ENCODE measurements at regions of chr12 and their contacts with region 1.

Region 1: GRCh38 chr12:118103604-118104382 is at the start of gene VSIG10:
- DNase-seq: peak; percentile 64
- H3K4me3 ChIP-seq: peak within 1 kb of the TSS; percentile 74 to 79 (median 77)
- H3K27ac ChIP-seq: peak within 1 kb of the TSS; percentile 13
- H3K4me1 ChIP-seq: peaks cover 9% of the 10 kb centered on the region
- H3K27me3 ChIP-seq: no peaks in the 10 kb centered on the region
- CTCF ChIP-seq: no peak
- total RNA-seq, gene VSIG10: 11.3 to 16.8 TPM

Region 2: DNA sequence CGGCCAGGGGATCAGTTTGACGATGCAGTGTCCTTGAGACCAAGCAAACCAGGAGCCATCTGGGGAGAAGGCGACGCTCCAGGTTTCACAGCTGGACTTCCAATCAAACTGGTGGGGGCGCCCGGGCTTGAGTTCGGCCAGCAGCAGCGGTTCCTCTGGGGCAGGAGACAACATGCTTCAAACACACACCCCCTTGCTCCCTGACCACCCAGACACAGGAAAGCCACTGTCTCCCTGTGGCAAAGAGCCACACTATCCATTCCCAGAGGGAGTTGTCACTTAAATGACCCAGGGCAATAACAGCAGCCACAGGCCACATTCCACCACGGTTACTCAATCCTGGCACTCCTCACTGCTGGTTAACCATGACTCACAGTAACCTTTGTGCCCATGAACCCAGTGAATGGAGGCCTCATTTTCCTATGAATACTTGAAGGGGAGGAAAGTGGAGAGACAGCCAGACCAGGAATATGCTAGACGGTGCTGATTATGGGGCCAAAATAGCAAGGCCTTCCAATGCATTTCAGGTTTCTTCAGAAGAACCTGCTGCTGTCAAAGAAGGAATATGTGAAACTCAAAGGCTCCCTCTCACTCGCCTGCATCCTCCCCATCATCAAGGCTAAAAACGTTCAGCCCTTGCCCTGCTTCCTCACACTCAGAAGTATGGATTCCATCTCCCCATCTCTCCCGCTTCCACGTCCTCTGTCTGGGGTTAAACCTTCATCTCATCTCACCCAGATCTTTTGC is 51.3 kb before region 1 on chr12:
- CTCF ChIA-PET with region 1: no interaction called
- dilution Hi-C with region 1: no loop called
- in situ Hi-C with region 1: no loop called
- intact Hi-C with region 1: loop called (anchors 2 kb)
- DNase-seq: peak; percentile 97
- H3K4me3 ChIP-seq: no peak overlapping the region
- H3K27ac ChIP-seq: peak overlapping the region; percentile 79
- H3K4me1 ChIP-seq: peaks cover 23% of the 10 kb centered on the region
- H3K27me3 ChIP-seq: no peaks in the 10 kb centered on the region
- CTCF ChIP-seq: no peak

Region 3: GRCh38 chr12:118061011-118061875 is 42.5 kb before region 1 on chr12 and contains the start of gene WSB2:
- CTCF ChIA-PET with region 1: no interaction called
- dilution Hi-C with region 1: no loop called
- in situ Hi-C with region 1: no loop called
- intact Hi-C with region 1: loop called (anchors 1 kb)
- DNase-seq: peak; percentile 26
- H3K4me3 ChIP-seq: peak within 1 kb of the TSS; percentile 77 to 93 (median 84)
- H3K27ac ChIP-seq: peak within 1 kb of the TSS; percentile 82
- H3K4me1 ChIP-seq: peaks cover 11% of the 10 kb centered on the region
- H3K27me3 ChIP-seq: no peaks in the 10 kb centered on the region
- CTCF ChIP-seq: no peak
- total RNA-seq, gene WSB2: 93.5 to 165 TPM

Measured in mammary epithelial cell (primary cell).